WTC11 (cell line): ENCODE measurements at regions of chr17 and their contacts with region 1.

Region 1: GRCh38 chr17:51371732-51372151 is 111.4 kb downstream of the UTP18 start:
- DNase-seq: peak; percentile 64
- ATAC-seq: peak; percentile 88
- H3K4me3 Mint-ChIP-seq: peak overlapping the region; percentile 54
- H3K27ac Mint-ChIP-seq: peak overlapping the region; percentile 30; the same call in 1 of the 2 replicates
- H3K4me1 Mint-ChIP-seq: peaks cover 37% of the 10 kb centered on the region
- H3K27me3 Mint-ChIP-seq: no peaks in the 10 kb centered on the region; the same call in 1 of the 2 replicates
- CTCF ChIP-seq: peak; percentile 53

Region 2: GRCh38 chr17:50956750-50957523 is 414.8 kb before region 1 on chr17:
- CTCF ChIA-PET with region 1: no interaction called
- POLR2A ChIA-PET with region 1: no interaction called
- DNase-seq: peak; percentile 79
- ATAC-seq: peak; percentile 89
- H3K4me3 Mint-ChIP-seq: no peak overlapping the region
- H3K27ac Mint-ChIP-seq: 0 out of 2 replicates have a peak overlapping the region, but pooled peaks have one; percentile 19
- H3K4me1 Mint-ChIP-seq: peaks cover 36% of the 10 kb centered on the region
- H3K27me3 Mint-ChIP-seq: no peaks in the 10 kb centered on the region
- CTCF ChIP-seq: peak; percentile 44; the same call in 1 of the 2 replicates

Region 3: DNA sequence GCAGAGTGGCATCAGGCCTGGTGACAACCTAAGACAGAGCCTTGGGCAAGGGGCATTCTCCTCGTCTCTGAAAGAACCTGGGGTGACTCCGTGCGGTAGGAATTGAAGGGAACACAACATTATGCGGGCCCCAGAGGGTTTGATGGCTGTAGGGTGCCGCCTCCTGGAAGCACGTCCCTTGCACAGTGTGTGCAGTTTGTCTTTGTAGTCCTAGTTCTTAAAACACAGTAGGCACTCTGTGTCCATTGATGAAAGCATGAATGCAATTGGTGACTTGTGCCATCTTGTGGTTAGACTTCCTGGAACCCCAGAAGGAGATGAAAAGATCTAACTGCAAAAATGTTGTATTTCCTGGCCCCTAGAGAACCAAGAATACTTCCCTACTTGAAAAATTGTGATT is 168.4 kb after region 1 on chr17:
- CTCF ChIA-PET with region 1: interaction called, 16 read pairs
- POLR2A ChIA-PET with region 1: no interaction called
- DNase-seq: no peak
- ATAC-seq: no peak
- H3K4me3 Mint-ChIP-seq: no peak overlapping the region
- H3K27ac Mint-ChIP-seq: no peak overlapping the region
- H3K4me1 Mint-ChIP-seq: peaks cover 4% of the 10 kb centered on the region; the same call in 1 of the 2 replicates
- H3K27me3 Mint-ChIP-seq: no peaks in the 10 kb centered on the region
- CTCF ChIP-seq: no peak